Activated CD4-positive, alpha-beta T cell treated with anti-CD3 and anti-CD28 coated beads for 36 hours (primary cell): ENCODE measurements at regions of chr11 and their contacts with region 1.

Region 1: GRCh38 chr11:13462901-13463778 is at the start of gene BTBD10:
- DNase-seq: peak; percentile 96
- ATAC-seq: peak; percentile 99
- H3K4me3 Mint-ChIP-seq: peak within 1 kb of the TSS; percentile 95
- H3K27ac Mint-ChIP-seq: peak within 1 kb of the TSS; percentile 99
- H3K4me1 Mint-ChIP-seq: peaks cover 40% of the 10 kb centered on the region
- H3K27me3 Mint-ChIP-seq: no peaks in the 10 kb centered on the region
- total RNA-seq, gene BTBD10: 20.1 to 25.4 TPM

Region 2: GRCh38 chr11:12673924-12674570 is 789.1 kb before region 1 on chr11 and contains the start of gene TEAD1:
- CTCF ChIA-PET with region 1: no interaction called
- POLR2A ChIA-PET with region 1: no interaction called
- intact Hi-C with region 1: loop called in 1 of 2 experiments (anchors 2 kb)
- DNase-seq: peak; percentile 94
- ATAC-seq: peak; percentile 91
- H3K4me3 Mint-ChIP-seq: peak within 1 kb of the TSS; percentile 70
- H3K27ac Mint-ChIP-seq: no peak within 1 kb of the TSS
- H3K4me1 Mint-ChIP-seq: peaks cover 7% of the 10 kb centered on the region
- H3K27me3 Mint-ChIP-seq: peaks cover 63% of the 10 kb centered on the region
- total RNA-seq, gene TEAD1: 0.59 to 0.65 TPM

Region 3: GRCh38 chr11:12900496-12900895 is 562.6 kb before region 1 on chr11:
- CTCF ChIA-PET with region 1: no interaction called
- POLR2A ChIA-PET with region 1: no interaction called
- intact Hi-C with region 1: no loop called
- DNase-seq: no peak
- ATAC-seq: no peak
- H3K4me3 Mint-ChIP-seq: no peak overlapping the region
- H3K27ac Mint-ChIP-seq: no peak overlapping the region
- H3K4me1 Mint-ChIP-seq: peaks cover 4% of the 10 kb centered on the region
- H3K27me3 Mint-ChIP-seq: peaks cover 8% of the 10 kb centered on the region

Region 4: GRCh38 chr11:13210424-13210823 is 252.7 kb before region 1 on chr11:
- CTCF ChIA-PET with region 1: interaction called, 4 read pairs
- POLR2A ChIA-PET with region 1: no interaction called
- intact Hi-C with region 1: loop called (anchors 2 to 5 kb)
- DNase-seq: peak; percentile 48
- ATAC-seq: no peak
- H3K4me3 Mint-ChIP-seq: no peak overlapping the region
- H3K27ac Mint-ChIP-seq: no peak overlapping the region
- H3K4me1 Mint-ChIP-seq: peaks cover 38% of the 10 kb centered on the region
- H3K27me3 Mint-ChIP-seq: peaks cover 2% of the 10 kb centered on the region

Region 5: DNA sequence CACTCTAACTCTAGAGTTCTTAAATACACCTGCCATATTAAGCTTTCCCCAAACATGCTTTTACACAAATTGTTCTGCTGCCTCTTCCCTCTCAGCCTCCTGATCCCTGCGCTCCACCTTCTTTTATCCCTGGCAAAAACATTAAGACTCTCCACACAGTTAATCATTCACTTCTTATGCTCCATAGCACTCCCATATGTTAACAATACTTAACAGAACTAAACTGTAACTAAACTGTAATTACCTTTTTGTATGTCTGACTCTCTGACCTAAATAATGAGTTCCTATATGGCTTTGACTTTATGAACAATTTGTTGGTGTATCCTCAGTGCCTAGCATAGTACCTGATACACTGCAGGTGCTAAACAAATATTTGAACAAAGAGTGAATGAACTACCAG is 71.9 kb before region 1 on chr11:
- CTCF ChIA-PET with region 1: no interaction called
- POLR2A ChIA-PET with region 1: no interaction called
- intact Hi-C with region 1: loop called in 1 of 2 experiments (anchors 5 kb)
- DNase-seq: no peak
- ATAC-seq: no peak
- H3K4me3 Mint-ChIP-seq: no peak overlapping the region
- H3K27ac Mint-ChIP-seq: peak overlapping the region; percentile 1
- H3K4me1 Mint-ChIP-seq: no peaks in the 10 kb centered on the region
- H3K27me3 Mint-ChIP-seq: no peaks in the 10 kb centered on the region

Region 6: GRCh38 chr11:13668102-13668956 is 205.2 kb after region 1 on chr11 and contains the start of gene FAR1:
- CTCF ChIA-PET with region 1: interaction called, 6 read pairs
- POLR2A ChIA-PET with region 1: interaction called, 7 read pairs
- intact Hi-C with region 1: loop called (anchors 1 kb)
- DNase-seq: peak; percentile 98
- ATAC-seq: peak; percentile 92
- H3K4me3 Mint-ChIP-seq: peak within 1 kb of the TSS; percentile 95
- H3K27ac Mint-ChIP-seq: peak within 1 kb of the TSS; percentile 96
- H3K4me1 Mint-ChIP-seq: peaks cover 48% of the 10 kb centered on the region
- H3K27me3 Mint-ChIP-seq: peaks cover 9% of the 10 kb centered on the region
- total RNA-seq, gene FAR1: 34.8 to 36.4 TPM

Region 7: GRCh38 chr11:13850231-13851005 is 387.3 kb after region 1 on chr11:
- CTCF ChIA-PET with region 1: no interaction called
- POLR2A ChIA-PET with region 1: no interaction called
- intact Hi-C with region 1: no loop called
- DNase-seq: no peak
- ATAC-seq: no peak
- H3K4me3 Mint-ChIP-seq: no peak overlapping the region
- H3K27ac Mint-ChIP-seq: no peak overlapping the region
- H3K4me1 Mint-ChIP-seq: peaks cover 11% of the 10 kb centered on the region
- H3K27me3 Mint-ChIP-seq: peaks cover 7% of the 10 kb centered on the region

Region 8: GRCh38 chr11:14380947-14381561 is 917.9 kb after region 1 on chr11:
- CTCF ChIA-PET with region 1: no interaction called
- POLR2A ChIA-PET with region 1: no interaction called
- intact Hi-C with region 1: no loop called
- DNase-seq: peak; percentile 64
- ATAC-seq: peak; percentile 89
- H3K4me3 Mint-ChIP-seq: peak overlapping the region; percentile 65
- H3K27ac Mint-ChIP-seq: no peak overlapping the region
- H3K4me1 Mint-ChIP-seq: peaks cover 15% of the 10 kb centered on the region
- H3K27me3 Mint-ChIP-seq: peaks cover 26% of the 10 kb centered on the region

Region 9: DNA sequence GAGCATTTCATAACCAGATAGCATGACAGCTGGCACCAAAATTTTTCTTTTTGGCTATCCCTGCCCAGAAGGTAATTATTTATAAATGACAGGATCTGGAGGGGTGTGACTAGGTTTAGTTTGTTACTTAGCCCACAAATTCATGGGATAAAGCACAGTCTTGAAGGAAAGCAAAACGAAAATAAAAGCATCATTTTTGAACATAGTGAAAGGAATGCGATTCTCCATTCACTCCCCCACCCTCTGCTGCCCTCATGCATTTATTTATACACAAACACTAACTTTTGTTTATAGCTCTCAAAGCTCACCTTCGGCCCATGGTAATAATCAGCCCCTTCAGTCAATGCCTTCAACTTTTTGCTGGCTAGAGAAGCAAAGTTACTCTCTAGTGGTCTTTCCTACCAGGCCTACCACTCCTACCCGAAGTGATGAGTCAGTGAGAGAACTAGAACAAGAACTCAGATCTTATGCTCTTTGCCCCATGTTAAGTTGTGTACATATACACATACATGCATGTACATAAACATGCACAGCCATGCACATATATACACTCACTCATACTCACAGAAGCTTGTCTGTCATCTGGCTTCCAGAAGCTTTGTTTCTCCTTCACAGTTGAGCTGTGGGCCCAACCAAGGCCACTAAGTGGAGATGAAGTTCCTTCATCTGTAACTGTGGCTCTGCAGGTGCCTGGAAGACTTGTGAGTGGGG is 1486.5 kb after region 1 on chr11:
- CTCF ChIA-PET with region 1: no interaction called
- POLR2A ChIA-PET with region 1: no interaction called
- intact Hi-C with region 1: no loop called
- DNase-seq: no peak
- ATAC-seq: no peak
- H3K4me3 Mint-ChIP-seq: no peak overlapping the region
- H3K27ac Mint-ChIP-seq: no peak overlapping the region
- H3K4me1 Mint-ChIP-seq: no peaks in the 10 kb centered on the region
- H3K27me3 Mint-ChIP-seq: no peaks in the 10 kb centered on the region